ENCODE measurements at regions of chr17 and their contacts with region 1.

Region 1: DNA sequence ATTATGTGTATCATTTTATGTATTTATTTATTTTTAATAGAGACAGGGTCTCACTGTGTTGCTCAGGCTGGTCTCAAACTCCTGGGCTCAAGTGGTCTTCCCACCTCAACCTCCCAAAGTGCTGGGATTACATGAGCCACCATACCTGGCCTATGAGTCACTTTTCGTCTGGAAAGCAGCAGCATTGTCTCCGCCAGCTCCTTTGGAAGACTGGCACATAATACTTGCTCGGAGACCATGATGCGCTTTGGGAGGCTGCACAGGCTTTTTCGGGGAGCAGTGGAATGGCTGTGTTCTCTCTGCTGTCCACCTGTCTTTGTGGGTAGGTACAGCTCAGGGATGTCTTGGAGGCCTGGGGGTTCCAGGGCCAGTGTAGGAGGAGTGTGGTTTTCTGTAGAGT is 102.2 kb downstream of the AATF start:
- DNase-seq: no peak
- H3K4me3 ChIP-seq: no peak overlapping the region
- H3K27ac ChIP-seq: peak overlapping the region in 1 of 2 donors; percentile 60
- H3K4me1 ChIP-seq: peaks cover 0 to 9% (median 5%) of the 10 kb centered on the region in 3 donors
- H3K27me3 ChIP-seq: no peaks in the 10 kb centered on the region
- CTCF ChIP-seq: no peak

Region 2: DNA sequence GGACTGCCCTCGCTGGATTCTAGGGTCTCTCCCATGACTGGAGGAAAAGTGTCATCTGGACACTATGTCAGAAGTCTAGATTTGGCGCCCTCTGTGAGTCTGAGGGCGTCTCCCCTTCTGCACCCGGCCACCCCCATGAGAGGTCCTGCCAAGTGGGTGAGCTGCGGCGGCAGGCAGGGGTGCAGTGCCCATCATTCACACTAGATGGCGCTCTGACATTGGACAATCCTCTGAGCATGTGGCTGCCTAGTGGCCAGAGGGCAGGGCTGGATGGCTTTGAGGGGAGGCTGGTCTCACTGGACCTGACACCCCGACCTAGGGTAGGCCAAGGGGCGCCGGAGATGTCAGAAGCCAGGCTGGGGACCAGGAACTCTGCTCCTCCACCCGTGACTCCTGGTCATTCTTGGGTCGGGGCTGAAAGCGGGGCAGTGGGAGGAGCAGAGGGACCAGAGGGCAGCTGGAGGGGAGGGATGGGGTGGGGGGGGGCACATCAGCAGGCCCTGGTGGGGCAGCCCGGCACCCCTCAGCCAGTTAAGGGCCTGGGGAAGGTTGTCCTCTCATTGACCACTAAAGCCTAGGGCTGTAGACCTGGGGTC is 421.6 kb before region 1 on chr17:
- intact Hi-C with region 1: loop called (anchors 10 kb)
- DNase-seq: peak; percentile 79 to 91 (median 83)
- H3K4me3 ChIP-seq: no peak overlapping the region
- H3K27ac ChIP-seq: no peak overlapping the region
- H3K4me1 ChIP-seq: no peaks in the 10 kb centered on the region
- H3K27me3 ChIP-seq: peaks cover 2% of the 10 kb centered on the region
- CTCF ChIP-seq: peak; percentile 98

Region 3: DNA sequence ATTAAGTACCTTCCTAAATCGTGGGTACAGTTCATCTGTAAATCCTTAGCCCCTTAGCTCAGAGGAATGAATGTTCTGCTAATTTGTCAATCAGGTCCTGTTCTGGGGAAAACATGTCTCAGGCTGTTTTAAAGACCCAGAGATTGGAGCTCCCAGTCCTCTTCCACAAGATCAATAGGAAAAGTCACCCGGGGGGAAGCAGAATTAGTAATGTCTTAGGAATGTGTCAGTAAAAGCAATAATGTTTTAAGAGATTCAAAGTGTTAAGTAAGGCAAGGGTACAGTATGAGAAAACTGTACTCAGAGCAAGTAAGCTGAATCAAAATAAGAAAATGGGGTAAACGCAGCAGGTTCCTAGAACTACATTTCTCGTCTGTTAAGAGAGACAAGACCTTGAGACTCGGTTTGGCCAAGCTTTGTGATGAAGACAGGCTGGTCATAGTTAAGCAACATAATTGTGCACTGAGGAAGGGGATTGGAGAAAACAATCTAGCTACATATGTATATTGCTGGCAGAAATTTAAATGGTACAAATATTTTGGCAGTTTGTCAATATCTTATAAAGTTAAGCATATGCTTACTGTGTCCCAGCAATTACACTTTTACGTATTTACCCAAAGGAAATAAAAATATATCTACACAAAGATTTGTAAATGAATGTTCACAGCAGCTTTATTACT is 132.0 kb after region 1 on chr17:
- intact Hi-C with region 1: no loop called
- DNase-seq: no peak
- H3K4me3 ChIP-seq: no peak overlapping the region
- H3K27ac ChIP-seq: no peak overlapping the region
- H3K4me1 ChIP-seq: no peaks in the 10 kb centered on the region
- H3K27me3 ChIP-seq: no peaks in the 10 kb centered on the region
- CTCF ChIP-seq: no peak

Measured in kidney (tissue), 22 donors.